ENCODE measurements at regions of chr4 and their contacts with region 1.

Region 1: DNA sequence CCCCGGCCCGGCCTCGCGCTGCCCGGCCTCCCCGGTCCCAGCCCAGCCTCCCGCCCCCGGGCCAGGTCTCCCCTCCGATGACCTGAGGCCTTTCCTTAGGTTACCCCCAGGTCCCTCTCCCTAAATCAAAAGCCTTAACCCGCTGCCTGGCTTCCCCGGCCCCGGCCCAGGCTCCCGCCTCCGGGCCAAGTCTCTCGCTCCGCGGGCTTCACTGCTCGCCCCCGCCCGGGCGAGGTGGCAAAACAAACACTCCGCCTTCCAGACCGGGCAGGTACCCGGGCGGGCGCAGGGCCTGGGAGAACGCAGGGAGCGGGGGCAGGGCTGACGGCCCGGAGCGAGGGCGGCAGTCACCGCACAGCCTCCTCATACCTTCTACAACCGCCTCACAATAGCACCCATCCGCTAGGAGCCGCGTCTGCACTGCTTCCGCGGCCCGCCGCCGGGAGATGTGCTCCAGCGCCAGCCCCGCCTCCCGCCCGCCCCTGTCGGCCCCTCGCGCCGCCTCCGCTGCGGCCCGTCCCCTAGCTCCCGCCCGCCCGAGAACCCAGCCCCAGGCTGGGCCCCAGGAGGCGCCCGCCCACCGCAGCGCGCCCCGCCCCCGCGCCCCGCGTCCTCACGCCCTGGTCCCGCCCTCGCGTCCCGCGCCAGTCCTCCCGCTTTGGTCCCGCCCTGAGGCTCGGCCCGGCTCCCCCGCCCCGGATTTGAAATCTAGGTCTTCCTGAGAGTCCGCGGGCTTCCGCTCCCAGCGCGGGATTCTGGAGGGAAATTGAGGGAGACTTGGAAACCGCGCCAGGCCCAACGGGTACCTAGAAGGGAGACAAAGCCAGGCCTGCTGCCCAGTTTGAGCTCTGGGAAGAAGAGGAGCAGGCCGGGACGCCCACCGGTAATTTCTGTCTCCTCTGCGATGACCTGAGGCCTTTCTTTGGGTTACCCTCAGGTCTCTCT is at the starts of genes CASP3 and PRIMPOL:
- DNase-seq: peak; percentile 92
- ATAC-seq: peak; percentile 93
- H3K4me3 ChIP-seq: peak within 1 kb of the TSS; percentile 80
- H3K27ac ChIP-seq: peak within 1 kb of the TSS; percentile 84
- H3K4me1 ChIP-seq: peaks cover 8% of the 10 kb centered on the region
- H3K27me3 ChIP-seq: no peaks in the 10 kb centered on the region
- CTCF ChIP-seq: peak; percentile 49
- POLR2A ChIP-seq: peak; percentile 97
- RAD21 ChIP-seq: peak; percentile 53
- total RNA-seq, gene CASP3: 26.7 and 58.9 TPM in 2 replicates
- total RNA-seq, gene PRIMPOL: 5.6 and 10.0 TPM in 2 replicates

Region 2: DNA sequence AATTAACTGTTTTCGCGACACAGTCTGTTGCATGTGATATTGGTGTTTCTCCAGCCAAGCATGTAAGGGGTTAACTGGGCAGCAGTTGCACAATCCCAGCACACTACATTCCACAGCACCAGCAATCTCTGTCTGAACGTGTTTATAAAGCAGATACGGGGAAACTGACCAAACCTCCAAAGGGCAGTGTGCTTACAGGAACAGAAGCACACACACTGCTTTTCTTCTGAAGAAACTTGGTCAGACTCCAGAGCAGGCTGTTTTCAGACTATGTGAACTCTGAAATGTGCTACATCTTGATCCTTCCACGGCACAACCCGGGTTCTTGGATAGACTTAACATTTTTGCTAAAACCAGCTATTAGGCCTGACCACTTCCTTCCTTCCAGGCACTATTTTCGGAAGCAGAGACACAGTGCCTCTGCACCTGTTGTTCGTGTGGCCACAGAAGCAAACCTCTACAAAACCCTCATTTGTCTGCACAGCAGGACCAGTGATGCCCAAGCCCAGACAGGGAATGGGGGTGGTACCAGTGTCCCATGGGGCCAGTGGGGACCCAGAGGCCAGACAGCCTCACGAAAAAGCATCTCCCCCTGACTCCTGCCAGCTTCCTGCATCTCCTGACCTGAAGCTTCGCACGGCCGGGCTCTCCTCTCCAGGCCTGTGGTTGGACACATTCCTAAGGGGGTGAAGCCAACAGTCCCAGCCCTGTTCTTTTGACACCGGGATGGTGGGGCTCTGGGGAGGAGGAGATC is 265.1 kb before region 1 on chr4:
- CTCF ChIA-PET with region 1: no interaction called
- POLR2A ChIA-PET with region 1: no interaction called
- dilution Hi-C with region 1: no loop called
- in situ Hi-C with region 1: no loop called
- intact Hi-C with region 1: loop called (anchors 10 kb)
- DNase-seq: peak; percentile 96
- ATAC-seq: peak; percentile 78
- H3K4me3 ChIP-seq: peak overlapping the region; percentile 17; the same call in 1 of the 2 replicates
- H3K27ac ChIP-seq: peak overlapping the region; percentile 92
- H3K4me1 ChIP-seq: peaks cover 27% of the 10 kb centered on the region
- H3K27me3 ChIP-seq: no peaks in the 10 kb centered on the region
- CTCF ChIP-seq: no peak
- POLR2A ChIP-seq: peak; percentile 41; the same call in 1 of the 2 replicates
- RAD21 ChIP-seq: 0 out of 2 replicates have a peak, but pooled peaks have one; percentile 3

Region 3: DNA sequence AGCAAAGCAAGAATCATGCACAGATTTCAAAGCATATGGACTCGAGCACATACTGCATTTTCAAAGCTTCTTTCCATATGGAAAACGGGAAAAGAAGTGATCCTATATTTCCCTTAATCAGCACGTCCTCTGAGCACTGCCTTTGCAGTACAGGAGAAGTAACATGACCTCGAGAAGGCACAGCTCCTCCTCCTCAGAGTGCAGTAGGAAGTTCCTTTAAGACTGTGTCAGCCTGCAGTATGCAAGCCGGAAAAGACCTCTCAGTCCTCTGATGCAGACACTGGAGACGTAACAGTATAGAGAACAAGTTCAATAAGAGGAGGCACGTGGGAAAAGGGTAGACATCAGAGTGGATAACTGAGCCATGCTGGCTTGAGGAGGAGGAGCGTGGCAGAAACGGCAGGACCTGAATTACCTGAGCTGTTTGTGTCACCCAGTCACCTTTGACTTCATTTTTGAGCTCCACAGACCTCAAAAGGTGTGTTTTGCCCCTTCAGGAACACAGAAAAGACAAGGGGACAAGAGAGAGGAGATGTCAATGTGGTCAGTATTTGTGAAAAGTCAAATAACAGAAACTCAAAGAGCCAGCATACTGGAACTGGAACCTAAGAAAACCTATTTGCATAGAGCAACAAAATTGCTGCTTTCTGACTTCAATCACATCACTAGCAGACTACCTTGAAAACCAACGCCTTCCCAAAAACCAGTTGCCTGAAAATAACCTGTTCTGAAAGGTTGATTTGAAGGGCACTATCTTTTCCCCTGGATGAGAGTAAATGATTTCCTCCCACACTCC is 195.7 kb before region 1 on chr4:
- CTCF ChIA-PET with region 1: no interaction called
- POLR2A ChIA-PET with region 1: no interaction called
- dilution Hi-C with region 1: no loop called
- in situ Hi-C with region 1: no loop called
- intact Hi-C with region 1: no loop called
- DNase-seq: peak; percentile 95
- ATAC-seq: peak; percentile 96
- H3K4me3 ChIP-seq: no peak overlapping the region
- H3K27ac ChIP-seq: peak overlapping the region; percentile 59
- H3K4me1 ChIP-seq: peaks cover 20% of the 10 kb centered on the region
- H3K27me3 ChIP-seq: no peaks in the 10 kb centered on the region
- CTCF ChIP-seq: no peak
- POLR2A ChIP-seq: no peak
- RAD21 ChIP-seq: peak; percentile 27

Region 4: GRCh38 chr4:184664448-184665210 is 15.3 kb after region 1 on chr4:
- CTCF ChIA-PET with region 1: interaction called, 3 read pairs
- POLR2A ChIA-PET with region 1: interaction called, 11 read pairs
- dilution Hi-C with region 1: no loop called
- in situ Hi-C with region 1: no loop called
- intact Hi-C with region 1: no loop called
- DNase-seq: peak; percentile 18
- ATAC-seq: peak; percentile 80
- H3K4me3 ChIP-seq: no peak overlapping the region
- H3K27ac ChIP-seq: no peak overlapping the region
- H3K4me1 ChIP-seq: peaks cover 3% of the 10 kb centered on the region
- H3K27me3 ChIP-seq: no peaks in the 10 kb centered on the region
- CTCF ChIP-seq: no peak
- POLR2A ChIP-seq: no peak
- RAD21 ChIP-seq: no peak

Region 5: DNA sequence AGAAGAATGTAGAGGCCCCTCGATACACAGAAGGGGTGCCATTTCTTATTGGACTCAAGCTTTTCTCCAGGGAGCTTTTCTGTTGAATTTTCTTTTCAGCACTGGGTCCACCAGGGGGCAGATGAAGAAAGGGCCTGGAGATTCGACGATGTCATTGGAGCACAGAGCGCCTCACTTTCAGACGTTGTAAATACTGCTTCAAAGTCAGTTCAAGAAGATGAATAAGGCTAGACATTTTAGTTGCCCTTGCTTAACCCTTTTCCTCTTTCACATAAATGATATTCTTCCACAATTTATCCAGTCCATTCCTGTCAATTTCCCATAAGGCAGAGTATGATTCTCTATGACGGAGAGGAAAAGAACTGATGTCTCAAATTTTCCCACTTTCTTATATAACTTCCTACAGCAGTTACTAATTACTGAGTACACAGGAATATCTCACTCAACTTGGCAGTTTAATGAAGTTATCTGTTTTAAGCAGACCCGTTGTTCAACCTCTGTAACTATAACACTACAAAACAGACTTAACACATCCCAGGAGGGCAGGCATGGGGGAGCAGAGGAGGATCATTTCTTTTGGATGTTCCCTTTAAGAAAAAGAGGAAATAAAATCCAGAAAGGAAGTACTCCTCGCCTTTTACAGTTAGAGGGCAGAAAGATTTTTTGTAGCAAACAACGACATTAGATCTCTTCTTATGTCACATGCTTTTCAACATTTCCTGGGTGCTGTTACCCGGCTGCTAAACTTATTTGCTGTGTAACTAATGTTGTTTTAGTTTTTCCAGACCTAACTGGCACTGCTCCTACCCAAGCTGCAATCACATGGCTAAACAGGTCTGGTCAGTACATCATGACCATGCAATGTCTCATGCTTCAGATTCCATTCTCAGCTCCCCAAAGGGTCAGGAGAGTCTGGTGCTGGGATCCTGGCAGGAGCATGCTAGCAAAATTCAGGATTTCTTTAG is 96.8 kb after region 1 on chr4:
- CTCF ChIA-PET with region 1: no interaction called
- POLR2A ChIA-PET with region 1: no interaction called
- dilution Hi-C with region 1: no loop called
- in situ Hi-C with region 1: no loop called
- intact Hi-C with region 1: loop called (anchors 5 kb)
- DNase-seq: peak; percentile 82
- ATAC-seq: peak; percentile 87
- H3K4me3 ChIP-seq: no peak overlapping the region
- H3K27ac ChIP-seq: no peak overlapping the region
- H3K4me1 ChIP-seq: peaks cover 4% of the 10 kb centered on the region; the same call in 1 of the 2 replicates
- H3K27me3 ChIP-seq: no peaks in the 10 kb centered on the region; the same call in 1 of the 2 replicates
- CTCF ChIP-seq: peak; percentile 79
- POLR2A ChIP-seq: no peak
- RAD21 ChIP-seq: peak; percentile 79

Region 6: DNA sequence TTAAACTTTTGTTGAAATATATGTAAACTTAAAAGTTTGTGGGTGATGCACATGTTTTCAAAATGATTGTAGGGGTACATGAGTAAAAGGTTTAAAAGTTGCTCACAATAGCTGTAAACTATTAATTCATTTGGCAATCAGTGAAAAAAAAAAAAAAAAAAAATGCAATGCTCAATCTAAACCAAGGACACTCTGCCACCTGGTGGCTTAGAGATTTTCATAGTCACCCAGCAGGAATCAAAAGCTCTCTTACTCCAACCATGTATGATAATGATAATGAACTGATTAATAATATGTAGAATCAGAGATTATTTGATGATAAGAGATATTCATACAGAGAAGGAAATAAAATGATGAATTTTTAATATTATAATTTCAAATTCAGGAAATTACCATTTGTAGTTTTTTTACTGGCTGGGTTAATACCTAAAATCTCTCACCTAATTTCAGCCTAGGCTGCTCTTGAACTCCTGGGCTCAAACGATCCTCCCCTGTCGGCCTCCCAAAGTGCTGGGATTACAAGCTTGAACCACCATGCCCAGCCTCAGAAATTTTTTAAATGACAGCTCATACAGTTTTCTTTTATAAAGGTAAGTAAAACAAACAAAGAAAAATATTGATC is 446.8 kb after region 1 on chr4:
- CTCF ChIA-PET with region 1: no interaction called
- POLR2A ChIA-PET with region 1: interaction called, 18 read pairs
- dilution Hi-C with region 1: no loop called
- in situ Hi-C with region 1: no loop called
- intact Hi-C with region 1: no loop called
- DNase-seq: peak; percentile 31
- ATAC-seq: 0 out of 2 replicates have a peak, but pooled peaks have one; percentile 37
- H3K4me3 ChIP-seq: no peak overlapping the region
- H3K27ac ChIP-seq: no peak overlapping the region
- H3K4me1 ChIP-seq: no peaks in the 10 kb centered on the region
- H3K27me3 ChIP-seq: peaks cover 16% of the 10 kb centered on the region
- CTCF ChIP-seq: peak; percentile 64
- POLR2A ChIP-seq: no peak
- RAD21 ChIP-seq: peak; percentile 58

Measured in IMR-90 (cell line).